Heart left ventricle (tissue), 16 donors: ENCODE measurements at regions of chr6 and their contacts with region 1.

Region 1: GRCh38 chr6:108604156-108604555 is 43.4 kb downstream of the FOXO3 start:
- DNase-seq: no peak
- ATAC-seq: no peak
- H3K4me3 ChIP-seq: no peak overlapping the region
- H3K27ac ChIP-seq: peak overlapping the region in 2 of 12 donors; percentile 0 to 17
- H3K4me1 ChIP-seq: peaks cover 13 to 76% (median 50%) of the 10 kb centered on the region in 12 donors
- H3K27me3 ChIP-seq: no peaks in the 10 kb centered on the region
- CTCF ChIP-seq: no peak
- POLR2A ChIP-seq: no peak

Region 2: GRCh38 chr6:108565893-108566292 is 38.3 kb before region 1 on chr6:
- intact Hi-C with region 1: loop called in 2 of 10 experiments (anchors 5 kb)
- DNase-seq: peak in 4 of 5 donors; percentile 43 to 69 (median 52)
- ATAC-seq: peak; percentile 14 to 56 (median 48)
- H3K4me3 ChIP-seq: peak overlapping the region in 5 of 12 donors; percentile 2 to 98 (median 90)
- H3K27ac ChIP-seq: peak overlapping the region; percentile 44 to 100 (median 98)
- H3K4me1 ChIP-seq: peaks cover 9 to 84% (median 55%) of the 10 kb centered on the region in 12 donors
- H3K27me3 ChIP-seq: no peaks in the 10 kb centered on the region
- CTCF ChIP-seq: peak in 7 of 12 donors; percentile 8 to 44 (median 24)
- POLR2A ChIP-seq: no peak